PC-9 (cell line): ENCODE measurements at regions of chr9 and their contacts with region 1.

Region 1: DNA sequence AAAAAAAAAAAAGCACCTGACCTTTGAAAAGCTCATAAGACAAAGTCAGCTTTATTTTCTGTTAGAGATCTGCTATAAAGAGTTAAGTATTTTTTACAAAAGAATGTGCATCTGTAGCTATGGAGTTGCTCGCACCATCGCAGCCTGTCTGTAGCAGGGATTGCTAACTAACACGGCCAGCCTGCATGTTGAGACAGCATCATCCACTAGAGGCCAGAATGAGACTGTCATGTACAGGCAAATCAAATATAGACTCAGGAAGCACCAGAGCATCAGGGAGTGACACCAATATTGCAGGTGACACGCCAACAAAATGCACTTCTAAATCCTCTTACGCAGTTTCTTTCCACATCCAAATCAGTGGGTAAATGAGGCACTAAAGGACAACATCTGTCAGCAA is 136.3 kb upstream of the RASEF start:
- DNase-seq: peak; percentile 34 to 47
- H3K4me3 ChIP-seq: no peak overlapping the region
- H3K27ac ChIP-seq: no peak overlapping the region
- H3K4me1 ChIP-seq: no peaks in the 10 kb centered on the region
- H3K27me3 ChIP-seq: no peaks in the 10 kb centered on the region
- CTCF ChIP-seq: peak; percentile 77

Region 2: GRCh38 chr9:83544002-83544698 is 344.9 kb after region 1 on chr9:
- CTCF ChIA-PET with region 1: interaction called, 8 read pairs
- POLR2A ChIA-PET with region 1: no interaction called
- intact Hi-C with region 1: loop called (anchors 1 kb)
- DNase-seq: peak; percentile 37 to 71
- H3K4me3 ChIP-seq: no peak overlapping the region
- H3K27ac ChIP-seq: no peak overlapping the region
- H3K4me1 ChIP-seq: peaks cover 11% of the 10 kb centered on the region; the same call in 1 of the 2 replicates
- H3K27me3 ChIP-seq: no peaks in the 10 kb centered on the region
- CTCF ChIP-seq: peak; percentile 82

Region 3: DNA sequence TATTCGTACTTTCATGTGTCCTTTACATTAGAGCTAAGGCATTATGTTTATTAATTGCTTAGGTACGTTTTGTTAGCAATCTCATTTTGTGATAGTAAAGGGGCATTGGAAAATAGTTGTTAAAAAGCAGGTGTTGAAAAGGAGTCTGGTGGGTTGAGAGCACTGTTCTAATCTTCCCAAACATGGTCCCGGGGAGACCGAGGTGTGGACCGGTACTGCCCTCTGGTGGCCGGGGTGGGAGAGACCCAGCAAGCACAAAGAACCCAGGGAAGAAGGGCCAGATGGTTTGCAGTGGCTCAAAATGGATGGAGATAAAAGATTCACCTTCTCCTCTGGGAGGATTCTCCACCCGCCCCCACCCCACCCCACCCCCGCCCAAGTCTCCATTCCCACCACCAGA is 449.8 kb after region 1 on chr9:
- CTCF ChIA-PET with region 1: no interaction called
- POLR2A ChIA-PET with region 1: no interaction called
- intact Hi-C with region 1: loop called (anchors 2 kb)
- DNase-seq: peak in 1 of 2 experiments; percentile 65
- H3K4me3 ChIP-seq: no peak overlapping the region
- H3K27ac ChIP-seq: no peak overlapping the region
- H3K4me1 ChIP-seq: no peaks in the 10 kb centered on the region
- H3K27me3 ChIP-seq: no peaks in the 10 kb centered on the region
- CTCF ChIP-seq: peak; percentile 78

Region 4: DNA sequence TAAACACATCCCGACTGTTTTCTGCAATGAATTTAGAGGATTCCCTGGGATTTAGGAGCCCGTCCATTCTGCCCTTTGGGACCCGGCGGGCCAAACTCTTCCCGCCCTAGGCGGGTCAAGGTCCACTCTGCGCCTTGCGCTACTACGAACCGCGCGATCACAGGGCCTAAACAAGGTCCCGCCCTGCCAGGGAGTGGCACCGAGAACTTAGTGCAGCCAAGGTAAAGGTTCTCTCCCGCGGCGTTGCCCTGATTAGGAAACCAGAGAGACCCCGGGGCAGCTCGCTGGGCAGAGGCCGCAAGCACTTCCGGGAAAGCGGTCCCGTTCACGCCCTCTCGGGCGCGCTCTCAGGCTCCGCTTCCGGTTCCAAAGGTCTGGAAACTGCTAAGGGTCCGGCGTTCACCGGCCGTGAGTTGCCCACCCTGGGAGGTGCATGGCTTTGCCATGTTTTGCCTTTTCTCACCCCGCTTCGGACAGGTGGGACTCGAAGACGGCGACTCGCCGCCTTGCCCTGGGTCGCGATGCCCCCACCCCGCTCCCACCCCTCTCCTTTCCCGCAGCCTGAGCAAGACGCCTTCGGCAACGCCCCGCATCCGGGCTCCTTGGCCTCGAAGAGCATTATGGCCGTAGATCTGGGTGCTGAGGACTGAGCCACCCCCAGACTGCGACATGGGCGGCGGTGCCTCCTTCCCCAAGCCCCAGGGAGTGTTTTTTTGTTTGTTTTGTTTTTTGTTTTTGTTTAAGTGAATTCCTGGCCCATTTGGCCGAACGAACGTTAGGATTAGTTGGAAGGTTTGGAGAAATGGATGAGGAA is 757.4 kb after region 1 on chr9:
- CTCF ChIA-PET with region 1: no interaction called
- POLR2A ChIA-PET with region 1: no interaction called
- intact Hi-C with region 1: no loop called
- DNase-seq: peak; percentile 68 to 78
- H3K4me3 ChIP-seq: peak overlapping the region; percentile 69
- H3K27ac ChIP-seq: peak overlapping the region; percentile 50
- H3K4me1 ChIP-seq: peaks cover 32% of the 10 kb centered on the region
- H3K27me3 ChIP-seq: no peaks in the 10 kb centered on the region
- CTCF ChIP-seq: no peak

Region 5: DNA sequence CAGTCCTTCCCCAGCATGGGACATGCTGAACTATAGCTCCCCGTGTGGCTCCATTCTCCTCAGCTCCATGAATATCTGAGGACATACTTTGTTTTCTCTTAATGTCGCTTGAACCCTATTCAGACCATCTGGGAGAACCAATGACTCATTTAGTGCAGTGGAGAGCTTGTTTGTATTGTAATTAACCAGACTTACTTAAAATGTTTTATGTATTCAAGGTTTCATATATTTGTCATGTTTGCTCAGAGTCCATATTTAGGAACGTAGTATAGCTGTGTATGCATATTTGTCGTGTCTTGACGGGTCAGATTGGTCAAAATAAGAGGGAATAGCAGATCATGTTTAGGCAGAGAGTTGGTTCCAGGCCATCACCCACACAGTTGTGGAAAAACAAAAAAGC is 1320.2 kb after region 1 on chr9:
- CTCF ChIA-PET with region 1: no interaction called
- POLR2A ChIA-PET with region 1: interaction called, 16 read pairs
- intact Hi-C with region 1: no loop called
- DNase-seq: no peak
- H3K4me3 ChIP-seq: no peak overlapping the region
- H3K27ac ChIP-seq: no peak overlapping the region
- H3K4me1 ChIP-seq: no peaks in the 10 kb centered on the region
- H3K27me3 ChIP-seq: peaks cover 3% of the 10 kb centered on the region; the same call in 1 of the 2 replicates
- CTCF ChIP-seq: no peak